Dendritic cell treated with granulocyte-macrophage colony-stimulating factor and Interleukin-4, amounts not matched to agents 40 ng/mL and 50 ng/mL, for 4 days (primary cell): ENCODE measurements at regions of chr3 and their contacts with region 1.

Region 1: GRCh38 chr3:187738331-187739093 is 6.8 kb downstream of the BCL6 start:
- H3K4me3 Mint-ChIP-seq: peak overlapping the region; percentile 87
- H3K27ac Mint-ChIP-seq: peak overlapping the region; percentile 100
- H3K4me1 Mint-ChIP-seq: peaks cover 72% of the 10 kb centered on the region
- H3K27me3 Mint-ChIP-seq: no peaks in the 10 kb centered on the region

Region 2: DNA sequence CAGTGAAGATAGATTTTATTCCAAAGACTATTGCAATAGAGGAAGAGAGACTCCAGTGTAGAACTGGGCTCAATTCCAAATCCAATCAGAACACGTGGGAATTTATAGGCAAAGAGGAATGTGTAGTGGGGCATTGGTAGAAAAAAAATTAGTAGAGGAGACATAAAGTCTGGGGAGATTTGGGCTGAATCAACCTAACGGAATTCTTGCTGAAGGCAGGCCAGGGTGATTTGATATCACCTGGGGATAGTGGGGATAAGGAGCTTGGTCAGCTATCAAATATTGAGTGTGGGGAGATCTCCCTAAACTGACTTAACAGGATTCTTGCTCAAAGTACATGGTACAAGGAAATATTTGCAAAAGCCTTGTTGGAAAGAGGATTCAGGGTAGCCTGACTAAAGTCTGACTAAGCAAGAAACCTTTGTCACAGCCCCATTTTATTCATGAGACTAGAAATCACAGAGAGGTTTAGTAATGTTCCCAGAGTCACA is 97.9 kb before region 1 on chr3:
- intact Hi-C with region 1: no loop called
- H3K4me3 Mint-ChIP-seq: no peak overlapping the region
- H3K27ac Mint-ChIP-seq: no peak overlapping the region
- H3K4me1 Mint-ChIP-seq: no peaks in the 10 kb centered on the region
- H3K27me3 Mint-ChIP-seq: peaks cover 17% of the 10 kb centered on the region

Region 3: GRCh38 chr3:187705164-187705563 is 33.3 kb before region 1 on chr3:
- intact Hi-C with region 1: no loop called
- H3K4me3 Mint-ChIP-seq: no peak overlapping the region
- H3K27ac Mint-ChIP-seq: no peak overlapping the region
- H3K4me1 Mint-ChIP-seq: peaks cover 10% of the 10 kb centered on the region
- H3K27me3 Mint-ChIP-seq: peaks cover 5% of the 10 kb centered on the region

Region 4: GRCh38 chr3:188051801-188052168 is 313.3 kb after region 1 on chr3:
- intact Hi-C with region 1: no loop called
- H3K4me3 Mint-ChIP-seq: no peak overlapping the region
- H3K27ac Mint-ChIP-seq: no peak overlapping the region
- H3K4me1 Mint-ChIP-seq: peaks cover 36% of the 10 kb centered on the region
- H3K27me3 Mint-ChIP-seq: peaks cover 12% of the 10 kb centered on the region

Region 5: GRCh38 chr3:188294823-188295487 is 556.4 kb after region 1 on chr3:
- intact Hi-C with region 1: loop called (anchors 5 kb)
- H3K4me3 Mint-ChIP-seq: no peak overlapping the region
- H3K27ac Mint-ChIP-seq: peak overlapping the region; percentile 71
- H3K4me1 Mint-ChIP-seq: peaks cover 84% of the 10 kb centered on the region
- H3K27me3 Mint-ChIP-seq: no peaks in the 10 kb centered on the region

Region 6: GRCh38 chr3:188589071-188589470 is 850.6 kb after region 1 on chr3:
- intact Hi-C with region 1: loop called (anchors 2 kb)
- H3K4me3 Mint-ChIP-seq: peak overlapping the region; percentile 9
- H3K27ac Mint-ChIP-seq: peak overlapping the region; percentile 91
- H3K4me1 Mint-ChIP-seq: peaks cover 74% of the 10 kb centered on the region
- H3K27me3 Mint-ChIP-seq: no peaks in the 10 kb centered on the region

Region 7: GRCh38 chr3:188819939-188820338 is 1081.4 kb after region 1 on chr3:
- intact Hi-C with region 1: loop called (anchors 5 kb)
- H3K4me3 Mint-ChIP-seq: no peak overlapping the region
- H3K27ac Mint-ChIP-seq: peak overlapping the region; percentile 91
- H3K4me1 Mint-ChIP-seq: peaks cover 66% of the 10 kb centered on the region
- H3K27me3 Mint-ChIP-seq: no peaks in the 10 kb centered on the region

Region 8: GRCh38 chr3:189148081-189148507 is 1409.6 kb after region 1 on chr3:
- intact Hi-C with region 1: loop called (anchors 2 kb)
- H3K4me3 Mint-ChIP-seq: no peak overlapping the region
- H3K27ac Mint-ChIP-seq: no peak overlapping the region
- H3K4me1 Mint-ChIP-seq: peaks cover 23% of the 10 kb centered on the region
- H3K27me3 Mint-ChIP-seq: peaks cover 4% of the 10 kb centered on the region